ENCODE measurements at regions of chr6 and their contacts with region 1.

Region 1: GRCh38 chr6:74409447-74409846 is 713.4 kb downstream of the CD109 start:
- DNase-seq: peak; percentile 49
- H3K4me3 ChIP-seq: no peak overlapping the region
- H3K27ac ChIP-seq: no peak overlapping the region
- H3K4me1 ChIP-seq: no peaks in the 10 kb centered on the region
- H3K27me3 ChIP-seq: no peaks in the 10 kb centered on the region
- CTCF ChIP-seq: peak; percentile 29 to 70

Region 2: GRCh38 chr6:73854998-73855718 is 554.3 kb before region 1 on chr6:
- CTCF ChIA-PET with region 1: no interaction called
- dilution Hi-C with region 1: no loop called
- in situ Hi-C with region 1: no loop called
- intact Hi-C with region 1: loop called (anchors 5 kb)
- DNase-seq: peak; percentile 41
- H3K4me3 ChIP-seq: no peak overlapping the region
- H3K27ac ChIP-seq: no peak overlapping the region
- H3K4me1 ChIP-seq: no peaks in the 10 kb centered on the region
- H3K27me3 ChIP-seq: no peaks in the 10 kb centered on the region
- CTCF ChIP-seq: peak; percentile 67 to 69

Region 3: DNA sequence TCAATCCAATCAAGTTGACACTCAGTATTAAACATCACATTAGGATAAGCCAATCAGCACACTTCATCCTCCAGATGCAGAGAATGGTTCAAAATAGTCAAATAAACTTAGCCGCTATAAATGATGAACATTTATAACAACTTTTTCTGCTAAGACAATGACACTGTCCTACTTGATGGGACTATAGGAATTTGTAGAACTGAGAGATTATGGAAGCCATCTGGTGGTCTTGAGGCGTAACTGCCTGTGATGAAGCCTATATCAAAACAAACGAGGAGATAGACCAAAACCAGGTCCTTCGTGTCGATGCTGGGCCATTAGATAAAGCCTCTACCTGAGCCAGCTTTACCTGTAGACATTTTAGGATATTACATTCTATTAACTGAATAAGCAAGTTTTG is 165.3 kb after region 1 on chr6:
- CTCF ChIA-PET with region 1: no interaction called
- dilution Hi-C with region 1: no loop called
- in situ Hi-C with region 1: no loop called
- intact Hi-C with region 1: loop called (anchors 2 kb)
- DNase-seq: no peak
- H3K4me3 ChIP-seq: no peak overlapping the region
- H3K27ac ChIP-seq: no peak overlapping the region
- H3K4me1 ChIP-seq: no peaks in the 10 kb centered on the region
- H3K27me3 ChIP-seq: no peaks in the 10 kb centered on the region
- CTCF ChIP-seq: peak; percentile 29 to 34

Region 4: GRCh38 chr6:74764486-74764885 is 355.0 kb after region 1 on chr6:
- CTCF ChIA-PET with region 1: no interaction called
- dilution Hi-C with region 1: no loop called
- in situ Hi-C with region 1: loop called in 1 of 2 experiments (anchors 25 kb)
- intact Hi-C with region 1: loop called (anchors 2 kb)
- DNase-seq: no peak
- H3K4me3 ChIP-seq: no peak overlapping the region
- H3K27ac ChIP-seq: no peak overlapping the region
- H3K4me1 ChIP-seq: no peaks in the 10 kb centered on the region
- H3K27me3 ChIP-seq: no peaks in the 10 kb centered on the region
- CTCF ChIP-seq: no peak

Region 5: GRCh38 chr6:74991573-74992332 is 582.3 kb after region 1 on chr6:
- CTCF ChIA-PET with region 1: no interaction called
- dilution Hi-C with region 1: no loop called
- in situ Hi-C with region 1: no loop called
- intact Hi-C with region 1: loop called (anchors 1 kb)
- DNase-seq: peak; percentile 92
- H3K4me3 ChIP-seq: no peak overlapping the region
- H3K27ac ChIP-seq: peak overlapping the region; percentile 93
- H3K4me1 ChIP-seq: peaks cover 25% of the 10 kb centered on the region
- H3K27me3 ChIP-seq: no peaks in the 10 kb centered on the region
- CTCF ChIP-seq: peak in 1 of 2 donors; percentile 39